ENCODE measurements at regions of chr20 and their contacts with region 1.

Region 1: GRCh38 chr20:51797357-51798028 is 4.8 kb downstream of the SALL4 start:
- DNase-seq: no peak
- H3K4me3 ChIP-seq: no peak overlapping the region
- H3K27ac ChIP-seq: no peak overlapping the region
- H3K4me1 ChIP-seq: peaks cover 7 to 31% (median 22%) of the 10 kb centered on the region in 6 donors
- H3K27me3 ChIP-seq: peaks cover 3 to 64% (median 40%) of the 10 kb centered on the region in 7 donors
- CTCF ChIP-seq: no peak
- POLR2A ChIP-seq: no peak

Region 2: DNA sequence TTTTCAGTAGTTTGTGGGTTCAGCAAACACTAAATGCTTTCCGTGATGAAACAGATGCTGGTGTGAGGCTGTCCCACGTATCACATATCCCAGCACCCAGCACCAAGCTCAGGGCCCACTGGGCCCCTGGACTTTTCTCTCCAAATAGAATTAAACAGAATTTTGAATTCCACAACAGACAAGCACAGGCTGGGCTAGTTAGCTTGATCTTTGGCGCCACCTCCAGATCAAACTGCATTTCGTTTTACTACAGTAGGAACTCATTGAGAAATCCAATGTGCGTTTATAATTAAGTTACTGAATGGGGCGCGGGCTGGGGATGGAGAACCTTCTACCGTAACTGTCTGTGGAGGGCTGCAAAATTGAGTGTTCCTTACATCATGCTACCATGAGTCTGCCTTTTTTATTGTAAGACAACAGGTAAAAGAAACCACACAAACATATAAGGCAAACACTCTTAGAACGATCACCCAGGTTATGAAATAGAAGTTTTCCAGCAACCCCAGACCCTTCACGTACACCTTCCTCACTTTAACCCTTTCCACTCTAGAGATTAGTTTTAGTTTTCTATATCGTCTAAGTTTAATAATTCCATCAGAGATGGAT is 286.2 kb after region 1 on chr20:
- intact Hi-C with region 1: loop called (anchors 5 kb)
- DNase-seq: no peak
- H3K4me3 ChIP-seq: no peak overlapping the region
- H3K27ac ChIP-seq: no peak overlapping the region
- H3K4me1 ChIP-seq: no peaks in the 10 kb centered on the region
- H3K27me3 ChIP-seq: no peaks in the 10 kb centered on the region
- CTCF ChIP-seq: peak in 7 of 11 experiments; percentile 20 to 52 (median 36)
- POLR2A ChIP-seq: no peak